ENCODE measurements at regions of chr2 and their contacts with region 1.

Region 1: GRCh38 chr2:12931186-12931844 is 214.6 kb downstream of the TRIB2 start:
- DNase-seq: peak; percentile 51
- ATAC-seq: peak; percentile 92; the same call in 1 of the 2 replicates
- H3K4me3 ChIP-seq: no peak overlapping the region
- H3K27ac ChIP-seq: no peak overlapping the region
- H3K4me1 ChIP-seq: peaks cover 13% of the 10 kb centered on the region; the same call in 1 of the 2 replicates
- H3K27me3 ChIP-seq: no peaks in the 10 kb centered on the region
- CTCF ChIP-seq: peak; percentile 87

Region 2: DNA sequence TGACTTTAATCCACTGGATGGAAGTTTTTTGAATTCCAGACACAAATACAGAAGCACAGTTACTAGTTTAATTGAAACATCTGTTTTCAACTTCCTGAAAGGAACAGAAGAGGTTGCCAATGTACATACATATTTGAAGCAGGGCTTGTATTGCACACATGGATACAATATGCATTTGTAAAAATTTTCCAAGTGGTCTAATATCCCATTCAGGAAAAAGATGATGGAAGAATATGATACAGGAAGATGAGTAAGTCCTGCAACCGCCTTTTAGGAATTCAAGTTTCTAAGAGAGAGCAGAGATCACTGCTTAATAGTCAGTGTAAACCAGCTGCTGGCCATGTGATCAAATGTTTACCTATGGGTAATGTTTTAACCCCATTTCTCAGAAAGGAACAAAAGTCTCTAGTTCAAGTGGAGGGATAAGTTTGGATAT is 50.9 kb after region 1 on chr2:
- CTCF ChIA-PET with region 1: no interaction called
- POLR2A ChIA-PET with region 1: no interaction called
- in situ Hi-C with region 1: no loop called
- intact Hi-C with region 1: no loop called
- DNase-seq: no peak
- ATAC-seq: no peak
- H3K4me3 ChIP-seq: no peak overlapping the region
- H3K27ac ChIP-seq: no peak overlapping the region
- H3K4me1 ChIP-seq: no peaks in the 10 kb centered on the region
- H3K27me3 ChIP-seq: no peaks in the 10 kb centered on the region
- CTCF ChIP-seq: no peak

Region 3: DNA sequence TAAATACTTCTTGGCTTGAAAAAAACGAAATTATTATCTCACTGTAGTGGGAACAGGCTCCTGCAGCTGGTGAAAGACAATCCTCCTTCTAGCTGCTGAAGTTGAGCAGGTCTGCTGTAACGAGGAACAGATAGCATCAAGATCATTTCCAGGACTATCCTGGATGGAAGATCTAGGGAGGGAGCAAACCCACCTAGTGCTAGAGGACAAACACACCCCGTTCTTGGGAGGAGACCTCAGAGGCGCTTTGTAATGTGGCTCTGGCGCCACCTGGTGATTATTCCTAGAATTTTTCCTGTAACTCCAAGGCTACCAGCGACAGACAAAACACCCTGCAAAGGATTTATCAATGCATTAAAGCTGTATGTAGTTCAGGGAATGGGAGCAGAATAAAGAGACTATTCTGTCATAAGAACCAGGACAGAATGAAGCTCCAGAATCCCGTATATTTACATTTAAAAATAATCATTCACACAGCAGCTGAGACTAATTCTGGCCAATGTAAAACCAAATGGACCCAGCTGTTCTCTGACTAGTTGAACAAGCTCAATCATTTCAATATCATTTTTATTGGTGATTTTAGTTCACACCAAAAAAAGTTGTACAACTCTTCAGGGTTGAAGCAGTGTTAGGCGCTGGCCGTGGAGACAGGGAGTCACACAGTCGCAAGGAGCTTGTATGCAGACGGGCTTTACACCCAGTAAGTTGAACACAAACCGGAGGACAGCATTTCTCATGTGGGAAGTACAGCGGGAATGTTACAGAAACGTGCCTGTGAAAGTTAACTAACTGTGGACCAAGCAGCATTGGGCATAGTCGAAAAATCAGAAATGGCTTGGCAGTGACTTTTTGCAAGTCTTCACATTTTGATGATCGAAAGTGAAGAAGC is 75.8 kb after region 1 on chr2:
- CTCF ChIA-PET with region 1: interaction called, 10 read pairs
- POLR2A ChIA-PET with region 1: no interaction called
- in situ Hi-C with region 1: no loop called
- intact Hi-C with region 1: no loop called
- DNase-seq: peak; percentile 60
- ATAC-seq: peak; percentile 97
- H3K4me3 ChIP-seq: peak overlapping the region in 1 of 2 experiments; percentile 16; a peak in 2 of 4 replicates
- H3K27ac ChIP-seq: peak overlapping the region; percentile 66
- H3K4me1 ChIP-seq: peaks cover 11% of the 10 kb centered on the region
- H3K27me3 ChIP-seq: no peaks in the 10 kb centered on the region
- CTCF ChIP-seq: peak; percentile 90

Measured in Panc1 (cell line).